PC-3 (cell line): ENCODE measurements at regions of chr7 and their contacts with region 1.

Region 1: DNA sequence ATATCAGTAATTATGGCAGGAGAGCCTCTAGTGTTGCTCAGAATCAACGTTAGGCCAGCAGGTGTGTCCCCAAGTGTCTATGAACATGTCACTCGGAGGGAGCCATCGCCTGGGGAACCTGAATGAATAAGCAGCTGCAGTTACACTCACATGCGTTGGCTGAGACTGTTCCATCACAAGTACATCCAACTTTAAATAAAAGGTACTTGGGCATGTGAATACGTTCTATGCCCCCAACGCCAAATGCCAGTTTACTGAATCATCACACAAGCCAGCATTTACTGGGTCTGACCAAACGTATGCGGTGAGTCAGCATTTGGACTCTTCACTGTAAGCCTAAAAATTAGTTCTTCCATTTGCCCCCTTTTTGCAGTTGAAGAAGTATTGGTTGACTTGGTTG is 207.6 kb upstream of the PLXNA4 start:
- DNase-seq: peak; percentile 94
- ATAC-seq: peak; percentile 97
- H3K4me3 ChIP-seq: no peak overlapping the region
- H3K27ac ChIP-seq: peak overlapping the region; percentile 65
- H3K4me1 ChIP-seq: peaks cover 22% of the 10 kb centered on the region
- H3K27me3 ChIP-seq: no peaks in the 10 kb centered on the region
- CTCF ChIP-seq: no peak

Region 2: GRCh38 chr7:132764762-132765161 is 19.1 kb before region 1 on chr7:
- CTCF ChIA-PET with region 1: no interaction called
- POLR2A ChIA-PET with region 1: no interaction called
- intact Hi-C with region 1: loop called (anchors 1 kb)
- DNase-seq: no peak
- ATAC-seq: no peak
- H3K4me3 ChIP-seq: no peak overlapping the region
- H3K27ac ChIP-seq: no peak overlapping the region
- H3K4me1 ChIP-seq: peaks cover 5% of the 10 kb centered on the region; the same call in 1 of the 2 replicates
- H3K27me3 ChIP-seq: no peaks in the 10 kb centered on the region
- CTCF ChIP-seq: no peak

Region 3: DNA sequence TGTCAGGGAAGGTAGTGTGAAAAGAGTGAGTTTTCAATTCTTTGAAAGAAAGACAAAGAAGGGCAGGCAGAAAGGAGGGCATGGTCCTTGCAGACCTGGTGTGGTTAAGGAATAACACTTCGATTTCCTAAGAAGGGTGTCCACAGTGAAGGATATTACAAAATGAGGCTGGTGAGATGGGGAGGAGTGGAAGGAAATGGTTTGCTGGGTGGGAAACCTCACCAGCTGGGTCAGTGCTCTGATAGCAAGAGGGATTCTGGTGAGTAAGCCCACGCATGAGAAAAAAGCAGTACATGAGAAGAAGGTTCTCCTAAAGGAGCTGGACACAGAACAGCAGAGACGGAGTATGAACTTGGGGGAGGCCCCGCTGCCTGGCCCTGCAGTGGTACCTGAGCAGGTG is 23.0 kb after region 1 on chr7:
- CTCF ChIA-PET with region 1: no interaction called
- POLR2A ChIA-PET with region 1: no interaction called
- intact Hi-C with region 1: no loop called
- DNase-seq: no peak
- ATAC-seq: no peak
- H3K4me3 ChIP-seq: no peak overlapping the region
- H3K27ac ChIP-seq: no peak overlapping the region
- H3K4me1 ChIP-seq: no peaks in the 10 kb centered on the region
- H3K27me3 ChIP-seq: no peaks in the 10 kb centered on the region
- CTCF ChIP-seq: no peak